ENCODE measurements at regions of chr2 and their contacts with region 1.

Region 1: GRCh38 chr2:200340508-200341224 is 34.2 kb downstream of the SPATS2L start:
- DNase-seq: no peak
- H3K4me3 ChIP-seq: no peak overlapping the region
- H3K27ac ChIP-seq: no peak overlapping the region
- H3K4me1 ChIP-seq: peaks cover 5% of the 10 kb centered on the region
- H3K27me3 ChIP-seq: no peaks in the 10 kb centered on the region
- CTCF ChIP-seq: no peak

Region 2: GRCh38 chr2:200199576-200200263 is 140.9 kb before region 1 on chr2:
- CTCF ChIA-PET with region 1: no interaction called
- POLR2A ChIA-PET with region 1: no interaction called
- intact Hi-C with region 1: no loop called
- DNase-seq: peak; percentile 22 to 77
- H3K4me3 ChIP-seq: no peak overlapping the region
- H3K27ac ChIP-seq: peak overlapping the region; percentile 58
- H3K4me1 ChIP-seq: peaks cover 14% of the 10 kb centered on the region
- H3K27me3 ChIP-seq: no peaks in the 10 kb centered on the region
- CTCF ChIP-seq: peak; percentile 46; the same call in 1 of the 2 replicates

Region 3: GRCh38 chr2:200239216-200239615 is 101.5 kb before region 1 on chr2:
- CTCF ChIA-PET with region 1: no interaction called
- POLR2A ChIA-PET with region 1: no interaction called
- intact Hi-C with region 1: no loop called
- DNase-seq: no peak
- H3K4me3 ChIP-seq: no peak overlapping the region
- H3K27ac ChIP-seq: no peak overlapping the region
- H3K4me1 ChIP-seq: no peaks in the 10 kb centered on the region
- H3K27me3 ChIP-seq: no peaks in the 10 kb centered on the region
- CTCF ChIP-seq: no peak

Region 4: GRCh38 chr2:200329798-200330197 is 10.9 kb before region 1 on chr2:
- CTCF ChIA-PET with region 1: no interaction called
- POLR2A ChIA-PET with region 1: no interaction called
- intact Hi-C with region 1: no loop called
- DNase-seq: no peak
- H3K4me3 ChIP-seq: no peak overlapping the region
- H3K27ac ChIP-seq: no peak overlapping the region
- H3K4me1 ChIP-seq: no peaks in the 10 kb centered on the region
- H3K27me3 ChIP-seq: no peaks in the 10 kb centered on the region
- CTCF ChIP-seq: no peak

Region 5: DNA sequence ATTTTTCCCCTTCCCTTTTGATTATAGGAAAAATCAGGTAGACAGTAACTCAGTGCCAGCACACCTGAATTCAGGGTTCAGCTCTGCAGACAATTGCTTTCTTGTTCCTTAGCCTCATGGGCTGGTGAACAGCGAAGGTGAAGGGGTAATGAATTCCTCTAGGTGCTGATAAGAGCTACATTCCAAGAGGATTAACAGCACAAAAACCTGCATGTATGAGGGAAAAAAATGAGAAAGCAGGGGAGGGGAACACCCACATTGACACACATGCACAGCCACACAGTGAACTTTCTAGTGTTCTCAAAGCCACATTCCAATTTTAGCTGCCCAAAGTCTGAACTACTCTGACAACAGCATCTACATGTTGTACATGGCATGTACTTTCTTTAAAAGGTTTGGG is 12.0 kb after region 1 on chr2:
- CTCF ChIA-PET with region 1: no interaction called
- POLR2A ChIA-PET with region 1: interaction called, 16 read pairs
- intact Hi-C with region 1: no loop called
- DNase-seq: peak; percentile 49 to 85
- H3K4me3 ChIP-seq: no peak overlapping the region
- H3K27ac ChIP-seq: peak overlapping the region; percentile 66
- H3K4me1 ChIP-seq: peaks cover 45% of the 10 kb centered on the region
- H3K27me3 ChIP-seq: no peaks in the 10 kb centered on the region
- CTCF ChIP-seq: no peak

Region 6: DNA sequence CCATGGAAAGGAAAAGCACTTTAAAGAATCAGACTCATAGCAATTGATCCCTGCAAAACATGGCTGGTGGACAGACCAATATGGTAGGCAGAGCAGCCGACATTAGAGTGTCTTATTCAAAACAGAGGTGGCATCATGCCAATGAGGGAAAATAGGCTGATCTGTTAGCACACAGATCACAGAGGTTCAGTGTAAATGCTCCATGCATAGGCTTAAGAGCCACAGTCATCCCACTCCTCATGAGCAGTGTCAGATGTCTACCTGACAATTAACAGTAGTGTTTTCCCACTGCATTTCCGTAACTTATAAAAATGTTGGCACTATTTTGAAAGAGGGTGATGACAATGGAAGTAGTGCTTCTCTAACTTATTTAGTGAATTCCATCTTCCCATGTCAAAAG is 52.5 kb after region 1 on chr2:
- CTCF ChIA-PET with region 1: no interaction called
- POLR2A ChIA-PET with region 1: no interaction called
- intact Hi-C with region 1: no loop called
- DNase-seq: no peak
- H3K4me3 ChIP-seq: no peak overlapping the region
- H3K27ac ChIP-seq: no peak overlapping the region
- H3K4me1 ChIP-seq: peaks cover 22% of the 10 kb centered on the region; the same call in 1 of the 2 replicates
- H3K27me3 ChIP-seq: no peaks in the 10 kb centered on the region
- CTCF ChIP-seq: no peak